B cell (primary cell): ENCODE measurements at regions of chr12 and their contacts with region 1.

Region 1: DNA sequence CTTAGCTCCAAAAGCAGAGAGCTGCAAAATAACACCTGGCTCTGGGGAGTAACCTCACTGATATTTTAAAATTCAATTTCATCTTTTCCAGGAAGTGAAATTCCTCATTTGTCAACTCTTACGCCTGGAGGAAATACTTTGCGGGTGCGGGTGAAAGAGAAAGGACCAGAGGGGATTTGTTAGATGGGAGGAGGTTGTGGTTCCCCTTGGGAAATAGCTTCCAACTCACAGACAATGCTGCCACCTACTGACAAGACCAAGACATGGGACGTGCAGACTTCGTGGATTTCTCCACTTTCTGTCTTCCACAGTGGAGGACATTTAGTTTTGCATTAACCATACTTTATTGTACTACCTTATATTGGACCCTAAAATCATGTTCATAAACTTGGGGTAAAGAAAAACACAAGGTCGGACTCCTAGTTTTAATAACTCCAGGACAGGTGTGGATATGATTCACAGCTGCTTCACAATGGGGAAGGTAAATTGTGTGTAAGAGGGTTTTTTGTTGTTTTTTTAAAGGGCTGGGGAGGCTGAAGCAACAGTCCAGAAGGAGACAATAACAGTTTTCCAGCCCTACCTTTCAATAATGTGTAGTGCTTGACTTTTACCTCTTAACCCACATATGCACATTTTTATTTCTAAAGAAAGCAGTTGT is 10.8 kb downstream of the FBXL14 start:
- DNase-seq: peak; percentile 86
- ATAC-seq: peak; percentile 93
- H3K4me3 ChIP-seq: peak overlapping the region in 2 of 5 experiments; percentile 12 to 28
- H3K4me3 Mint-ChIP-seq: peak overlapping the region; percentile 79
- H3K27ac ChIP-seq: no peak overlapping the region
- H3K27ac Mint-ChIP-seq: no peak overlapping the region
- H3K4me1 ChIP-seq: peaks cover 6 to 7% of the 10 kb centered on the region in 2 donors
- H3K4me1 Mint-ChIP-seq: peaks cover 19% of the 10 kb centered on the region
- H3K27me3 ChIP-seq: no peaks in the 10 kb centered on the region
- H3K27me3 Mint-ChIP-seq: no peaks in the 10 kb centered on the region
- CTCF ChIP-seq: peak; percentile 92

Region 2: GRCh38 chr12:569803-570434 is 1013.6 kb before region 1 on chr12:
- CTCF ChIA-PET with region 1: interaction called, 26 read pairs
- POLR2A ChIA-PET with region 1: no interaction called
- intact Hi-C with region 1: loop called (anchors 1 kb)
- DNase-seq: peak; percentile 87
- ATAC-seq: peak; percentile 97
- H3K4me3 ChIP-seq: peak overlapping the region; percentile 21 to 72 (median 53)
- H3K4me3 Mint-ChIP-seq: peak overlapping the region; percentile 91
- H3K27ac ChIP-seq: no peak overlapping the region
- H3K27ac Mint-ChIP-seq: peak overlapping the region; percentile 32
- H3K4me1 ChIP-seq: peaks cover 4 to 14% of the 10 kb centered on the region in 2 donors
- H3K4me1 Mint-ChIP-seq: peaks cover 4% of the 10 kb centered on the region
- H3K27me3 ChIP-seq: no peaks in the 10 kb centered on the region
- H3K27me3 Mint-ChIP-seq: no peaks in the 10 kb centered on the region
- CTCF ChIP-seq: peak; percentile 94

Region 3: DNA sequence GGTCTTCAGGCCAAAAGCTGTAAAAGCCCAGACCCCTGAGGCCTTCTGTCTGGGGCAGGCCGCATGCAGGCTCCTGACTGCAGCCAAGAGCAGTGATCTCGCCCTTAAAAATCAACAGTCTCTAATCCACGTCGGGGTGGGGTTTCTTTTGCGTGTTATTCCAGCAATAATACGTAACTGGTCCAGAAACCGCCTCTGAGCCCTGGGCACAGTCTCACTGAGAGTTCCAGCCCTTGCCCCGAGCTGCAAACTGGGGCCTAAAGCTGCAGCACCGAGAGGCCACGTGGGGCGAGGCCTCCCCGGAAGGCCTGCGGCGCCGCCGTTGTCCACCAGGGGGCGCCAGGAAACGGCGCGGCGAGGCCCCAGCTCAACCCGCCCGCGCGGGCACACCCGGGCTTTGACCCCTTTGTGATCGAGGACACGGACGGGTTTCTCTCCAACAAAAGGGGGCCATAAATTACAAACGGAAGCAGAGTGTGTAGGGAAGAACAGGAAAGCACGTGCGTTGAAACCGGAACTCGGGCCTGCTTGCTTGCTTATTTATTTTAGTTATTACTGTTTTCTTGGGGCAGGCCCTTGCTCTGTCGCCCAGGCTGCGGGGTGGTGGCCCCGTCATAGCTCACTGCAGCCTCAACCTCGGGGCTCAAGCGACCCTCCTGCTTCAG is 1007.5 kb before region 1 on chr12:
- CTCF ChIA-PET with region 1: interaction called, 26 read pairs
- POLR2A ChIA-PET with region 1: no interaction called
- intact Hi-C with region 1: no loop called
- DNase-seq: peak; percentile 88
- ATAC-seq: peak; percentile 99
- H3K4me3 ChIP-seq: peak overlapping the region in 4 of 5 experiments; percentile 20 to 34 (median 26)
- H3K4me3 Mint-ChIP-seq: peak overlapping the region; percentile 79
- H3K27ac ChIP-seq: no peak overlapping the region
- H3K27ac Mint-ChIP-seq: peak overlapping the region; percentile 65
- H3K4me1 ChIP-seq: peaks cover 8 to 12% of the 10 kb centered on the region in 2 donors
- H3K4me1 Mint-ChIP-seq: peaks cover 8% of the 10 kb centered on the region
- H3K27me3 ChIP-seq: no peaks in the 10 kb centered on the region
- H3K27me3 Mint-ChIP-seq: no peaks in the 10 kb centered on the region
- CTCF ChIP-seq: peak; percentile 97

Region 4: GRCh38 chr12:823028-823698 is 760.4 kb before region 1 on chr12:
- CTCF ChIA-PET with region 1: interaction called, 27 read pairs
- POLR2A ChIA-PET with region 1: no interaction called
- intact Hi-C with region 1: no loop called
- DNase-seq: peak; percentile 78
- ATAC-seq: peak; percentile 94
- H3K4me3 ChIP-seq: no peak overlapping the region
- H3K4me3 Mint-ChIP-seq: peak overlapping the region; percentile 1
- H3K27ac ChIP-seq: peak overlapping the region; percentile 40 to 57
- H3K27ac Mint-ChIP-seq: peak overlapping the region; percentile 32
- H3K4me1 ChIP-seq: peaks cover 16 to 23% of the 10 kb centered on the region in 2 donors
- H3K4me1 Mint-ChIP-seq: peaks cover 35% of the 10 kb centered on the region
- H3K27me3 ChIP-seq: no peaks in the 10 kb centered on the region
- H3K27me3 Mint-ChIP-seq: no peaks in the 10 kb centered on the region
- CTCF ChIP-seq: no peak

Region 5: GRCh38 chr12:1108276-1108675 is 475.3 kb before region 1 on chr12:
- CTCF ChIA-PET with region 1: interaction called, 13 read pairs
- POLR2A ChIA-PET with region 1: no interaction called
- intact Hi-C with region 1: no loop called
- DNase-seq: peak; percentile 68
- ATAC-seq: peak; percentile 86
- H3K4me3 ChIP-seq: no peak overlapping the region
- H3K4me3 Mint-ChIP-seq: no peak overlapping the region
- H3K27ac ChIP-seq: no peak overlapping the region
- H3K27ac Mint-ChIP-seq: no peak overlapping the region
- H3K4me1 ChIP-seq: peaks cover 5 to 8% of the 10 kb centered on the region in 2 donors
- H3K4me1 Mint-ChIP-seq: peaks cover 13% of the 10 kb centered on the region
- H3K27me3 ChIP-seq: no peaks in the 10 kb centered on the region
- H3K27me3 Mint-ChIP-seq: no peaks in the 10 kb centered on the region
- CTCF ChIP-seq: no peak

Region 6: DNA sequence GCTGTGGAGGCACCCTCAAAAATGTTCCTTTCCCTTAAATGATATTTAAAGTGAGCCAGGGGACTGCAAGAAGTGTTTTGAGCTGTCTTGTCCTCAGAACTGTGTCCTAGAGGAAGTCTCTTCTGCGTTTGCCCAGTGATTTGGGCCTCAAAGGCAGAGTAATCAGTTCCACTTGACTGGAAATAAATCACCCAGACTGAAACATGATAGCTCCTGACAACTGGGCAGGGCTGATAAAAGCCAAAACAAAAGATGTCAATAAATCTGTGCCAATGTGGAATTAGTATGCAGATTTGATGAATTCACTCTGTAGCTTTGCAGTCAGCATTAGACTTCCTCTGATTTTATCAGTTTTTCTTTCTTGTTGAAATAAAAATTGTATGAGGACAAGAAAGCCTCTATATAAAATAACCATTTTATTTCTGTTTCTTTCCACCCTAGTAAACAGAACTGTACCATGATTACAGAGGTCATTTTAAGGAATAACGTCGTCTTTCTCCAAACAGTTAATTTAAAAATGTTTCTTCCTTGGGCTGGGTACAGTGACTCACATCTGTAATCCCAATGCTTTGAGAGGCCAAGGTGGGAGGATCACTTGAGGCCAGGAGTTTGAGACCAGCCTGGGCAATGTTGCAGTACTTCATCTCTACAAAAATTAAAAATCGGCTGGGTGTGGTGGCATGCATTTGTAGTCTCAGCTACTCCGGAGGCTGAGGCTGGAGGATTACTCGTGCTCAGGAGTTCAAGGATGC is 411.7 kb before region 1 on chr12:
- CTCF ChIA-PET with region 1: no interaction called
- POLR2A ChIA-PET with region 1: interaction called, 10 read pairs
- intact Hi-C with region 1: no loop called
- DNase-seq: no peak
- ATAC-seq: no peak
- H3K4me3 ChIP-seq: no peak overlapping the region
- H3K4me3 Mint-ChIP-seq: no peak overlapping the region
- H3K27ac ChIP-seq: no peak overlapping the region
- H3K27ac Mint-ChIP-seq: no peak overlapping the region
- H3K4me1 ChIP-seq: peaks cover 4% of the 10 kb centered on the region in 2 donors
- H3K4me1 Mint-ChIP-seq: peaks cover 11% of the 10 kb centered on the region
- H3K27me3 ChIP-seq: no peaks in the 10 kb centered on the region
- H3K27me3 Mint-ChIP-seq: no peaks in the 10 kb centered on the region
- CTCF ChIP-seq: no peak

Region 7: GRCh38 chr12:1605129-1606020 is 21.8 kb after region 1 on chr12:
- CTCF ChIA-PET with region 1: interaction called, 37 read pairs
- POLR2A ChIA-PET with region 1: interaction called, 4 read pairs
- intact Hi-C with region 1: loop called (anchors 1 kb)
- DNase-seq: peak; percentile 83
- ATAC-seq: peak; percentile 61
- H3K4me3 ChIP-seq: peak overlapping the region; percentile 37 to 63 (median 44)
- H3K4me3 Mint-ChIP-seq: peak overlapping the region; percentile 97
- H3K27ac ChIP-seq: no peak overlapping the region
- H3K27ac Mint-ChIP-seq: peak overlapping the region; percentile 66
- H3K4me1 ChIP-seq: peaks cover 11 to 27% of the 10 kb centered on the region in 2 donors
- H3K4me1 Mint-ChIP-seq: peaks cover 29% of the 10 kb centered on the region
- H3K27me3 ChIP-seq: no peaks in the 10 kb centered on the region
- H3K27me3 Mint-ChIP-seq: peaks cover 3% of the 10 kb centered on the region
- CTCF ChIP-seq: peak; percentile 72